Heart left ventricle (tissue), 16 donors: ENCODE measurements at regions of chr18 and their contacts with region 1.

Region 1: DNA sequence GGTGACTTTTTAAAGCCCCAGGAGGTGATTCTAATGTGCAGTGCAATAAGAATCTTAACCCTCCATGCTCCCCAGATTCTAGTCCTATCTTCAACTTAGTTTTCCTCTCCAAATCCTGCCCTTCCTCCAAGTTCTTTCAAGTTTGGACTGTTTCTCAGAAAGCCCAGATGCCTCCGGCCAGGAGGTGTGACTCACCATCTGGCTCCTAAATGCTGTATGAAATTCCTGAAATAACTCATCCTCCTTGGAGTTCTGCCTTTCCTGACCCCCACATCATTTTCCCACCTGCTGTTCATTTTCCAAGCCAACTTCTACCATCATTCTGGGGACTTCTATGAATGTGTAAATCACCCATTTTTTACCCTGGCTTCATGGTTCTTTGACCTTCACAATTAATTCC is 118.2 kb upstream of the NOL4 start:
- DNase-seq: no peak
- ATAC-seq: no peak
- H3K4me3 ChIP-seq: no peak overlapping the region
- H3K27ac ChIP-seq: no peak overlapping the region
- H3K4me1 ChIP-seq: no peaks in the 10 kb centered on the region
- H3K27me3 ChIP-seq: no peaks in the 10 kb centered on the region
- CTCF ChIP-seq: no peak
- POLR2A ChIP-seq: no peak

Region 2: DNA sequence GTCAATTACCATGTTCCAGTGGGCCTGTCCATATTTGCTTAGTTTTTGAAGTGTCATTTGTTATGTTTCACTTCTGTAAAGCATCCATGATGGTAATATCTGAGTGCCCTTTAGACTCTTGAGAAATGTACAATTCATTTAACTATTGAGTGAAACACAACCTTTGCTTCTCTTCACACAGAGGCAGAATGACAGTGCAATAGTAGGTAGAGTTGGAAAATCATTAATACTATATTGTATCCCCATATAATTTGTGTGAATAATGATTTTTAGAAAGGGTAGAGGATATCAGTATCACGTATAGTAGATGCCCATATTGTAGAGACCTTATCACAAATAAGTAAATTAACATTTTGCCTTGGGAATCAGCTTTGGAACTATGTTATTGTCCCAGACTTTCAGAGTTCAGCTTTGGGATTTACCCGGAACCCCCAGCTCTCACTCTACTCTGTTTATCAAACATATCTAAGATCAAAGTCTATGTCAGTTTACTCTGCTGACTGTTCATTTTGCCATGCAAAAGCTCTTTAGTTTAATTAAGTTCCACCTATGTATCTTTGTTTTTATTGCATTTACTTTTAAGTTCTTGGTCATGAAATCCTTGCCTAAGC is 54.4 kb after region 1 on chr18:
- intact Hi-C with region 1: loop called in 1 of 10 experiments (anchors 5 kb)
- DNase-seq: no peak
- ATAC-seq: no peak
- H3K4me3 ChIP-seq: no peak overlapping the region
- H3K27ac ChIP-seq: no peak overlapping the region
- H3K4me1 ChIP-seq: no peaks in the 10 kb centered on the region
- H3K27me3 ChIP-seq: no peaks in the 10 kb centered on the region
- CTCF ChIP-seq: no peak
- POLR2A ChIP-seq: no peak

Region 3: GRCh38 chr18:34444622-34445021 is 101.7 kb after region 1 on chr18:
- intact Hi-C with region 1: no loop called
- DNase-seq: no peak
- ATAC-seq: no peak
- H3K4me3 ChIP-seq: no peak overlapping the region
- H3K27ac ChIP-seq: no peak overlapping the region
- H3K4me1 ChIP-seq: no peaks in the 10 kb centered on the region
- H3K27me3 ChIP-seq: no peaks in the 10 kb centered on the region
- CTCF ChIP-seq: no peak
- POLR2A ChIP-seq: no peak

Region 4: GRCh38 chr18:35071819-35072247 is 728.9 kb after region 1 on chr18:
- intact Hi-C with region 1: no loop called
- DNase-seq: no peak
- ATAC-seq: peak in 3 of 4 donors; percentile 18 to 38 (median 33)
- H3K4me3 ChIP-seq: no peak overlapping the region
- H3K27ac ChIP-seq: peak overlapping the region in 11 of 12 donors; percentile 29 to 84 (median 71)
- H3K4me1 ChIP-seq: peaks cover 4 to 85% (median 56%) of the 10 kb centered on the region in 12 donors
- H3K27me3 ChIP-seq: no peaks in the 10 kb centered on the region
- CTCF ChIP-seq: no peak
- POLR2A ChIP-seq: no peak